ENCODE measurements at regions of chr17 and their contacts with region 1.

Region 1: GRCh38 chr17:55549140-55549539 is 37.9 kb upstream of the SMIM36 start:
- DNase-seq: peak; percentile 30
- H3K4me3 Mint-ChIP-seq: no peak overlapping the region
- H3K27ac Mint-ChIP-seq: no peak overlapping the region
- H3K4me1 Mint-ChIP-seq: peaks cover 9% of the 10 kb centered on the region
- H3K27me3 Mint-ChIP-seq: no peaks in the 10 kb centered on the region
- CTCF ChIP-seq: no peak

Region 2: DNA sequence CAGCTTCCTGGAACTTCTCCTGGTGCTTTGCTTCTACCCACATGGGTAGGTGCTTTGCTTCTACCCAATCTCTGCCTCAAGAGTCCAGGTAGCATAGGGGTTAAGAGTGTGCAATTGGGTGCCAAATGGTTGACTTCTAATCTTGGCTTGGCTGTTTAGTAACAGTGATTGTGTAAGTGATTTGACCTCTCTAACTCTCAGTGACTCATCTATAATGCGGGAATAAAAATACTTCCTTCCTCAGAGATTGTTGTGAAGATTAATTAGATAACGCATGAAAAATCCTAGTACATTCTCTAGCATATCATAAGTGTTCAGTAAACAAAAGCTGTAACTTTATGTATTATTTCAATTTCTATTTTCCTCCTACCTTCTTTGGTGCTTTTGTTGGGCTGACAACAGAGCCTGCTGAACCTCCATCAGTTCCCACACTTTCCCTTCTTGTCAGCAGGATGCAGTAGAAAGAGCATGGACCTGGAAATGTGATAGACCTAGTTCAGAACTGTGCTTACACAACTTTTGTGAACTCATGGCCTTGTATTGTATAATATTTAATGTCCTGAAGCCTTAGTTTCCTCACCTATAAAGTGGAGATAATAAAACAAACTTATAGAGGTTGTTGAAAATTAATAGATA is 35.0 kb after region 1 on chr17:
- CTCF ChIA-PET with region 1: no interaction called
- intact Hi-C with region 1: loop called (anchors 5 kb)
- DNase-seq: peak; percentile 5
- H3K4me3 Mint-ChIP-seq: no peak overlapping the region
- H3K27ac Mint-ChIP-seq: peak overlapping the region; percentile 73
- H3K4me1 Mint-ChIP-seq: peaks cover 64% of the 10 kb centered on the region
- H3K27me3 Mint-ChIP-seq: no peaks in the 10 kb centered on the region
- CTCF ChIP-seq: no peak

Region 3: GRCh38 chr17:55601874-55602364 is 52.8 kb after region 1 on chr17:
- CTCF ChIA-PET with region 1: no interaction called
- intact Hi-C with region 1: loop called (anchors 1 kb)
- DNase-seq: peak; percentile 44
- H3K4me3 Mint-ChIP-seq: no peak overlapping the region
- H3K27ac Mint-ChIP-seq: no peak overlapping the region
- H3K4me1 Mint-ChIP-seq: no peaks in the 10 kb centered on the region
- H3K27me3 Mint-ChIP-seq: no peaks in the 10 kb centered on the region
- CTCF ChIP-seq: peak; percentile 59

Region 4: GRCh38 chr17:55717898-55718735 is 169.0 kb after region 1 on chr17:
- CTCF ChIA-PET with region 1: no interaction called
- intact Hi-C with region 1: loop called (anchors 1 kb)
- DNase-seq: peak; percentile 76
- H3K4me3 Mint-ChIP-seq: no peak overlapping the region
- H3K27ac Mint-ChIP-seq: no peak overlapping the region
- H3K4me1 Mint-ChIP-seq: peaks cover 9% of the 10 kb centered on the region
- H3K27me3 Mint-ChIP-seq: peaks cover 9% of the 10 kb centered on the region
- CTCF ChIP-seq: peak; percentile 39